Right ventricle myocardium inferior (tissue), 1 donor: ENCODE measurements at regions of chr18 and their contacts with region 1.

Region 1: GRCh38 chr18:32175265-32175664 is 14.6 kb upstream of the MEP1B start:
- DNase-seq: no peak
- ATAC-seq: peak; percentile 39

Region 2: DNA sequence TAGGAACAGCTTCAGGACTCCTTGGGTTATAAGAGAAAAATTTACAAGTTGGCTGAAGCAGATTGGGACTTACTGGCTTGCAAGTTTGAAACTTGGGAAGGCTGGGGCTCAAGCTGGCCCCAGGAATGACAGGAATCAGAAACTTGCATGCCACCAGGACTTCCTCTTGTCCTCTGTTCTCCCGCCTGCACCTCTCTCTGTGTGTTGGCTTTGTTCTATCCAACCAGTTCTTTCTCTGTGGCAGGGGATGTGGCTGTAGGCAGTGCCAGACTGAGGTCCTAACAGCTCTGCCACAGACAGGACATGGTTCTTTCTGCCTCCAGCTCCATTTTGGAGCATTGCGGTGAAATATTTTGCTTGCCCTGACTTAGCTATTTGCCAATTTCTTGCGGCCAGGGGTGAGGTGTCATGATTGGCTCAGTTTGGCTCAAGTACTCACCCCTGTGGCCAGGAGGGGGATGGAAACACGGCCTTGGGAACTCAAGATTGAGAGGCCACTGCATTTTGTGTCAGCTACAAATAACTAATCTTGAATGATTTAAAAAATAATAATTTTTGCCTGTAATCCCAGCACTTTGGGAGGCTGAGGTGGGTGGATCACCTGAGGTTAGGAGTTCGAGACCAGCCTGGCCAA is 63.5 kb after region 1 on chr18:
- intact Hi-C with region 1: loop called (anchors 10 kb)
- DNase-seq: no peak
- ATAC-seq: no peak